HEK293 (cell line): ENCODE measurements at regions of chr6 and their contacts with region 1.

Region 1: DNA sequence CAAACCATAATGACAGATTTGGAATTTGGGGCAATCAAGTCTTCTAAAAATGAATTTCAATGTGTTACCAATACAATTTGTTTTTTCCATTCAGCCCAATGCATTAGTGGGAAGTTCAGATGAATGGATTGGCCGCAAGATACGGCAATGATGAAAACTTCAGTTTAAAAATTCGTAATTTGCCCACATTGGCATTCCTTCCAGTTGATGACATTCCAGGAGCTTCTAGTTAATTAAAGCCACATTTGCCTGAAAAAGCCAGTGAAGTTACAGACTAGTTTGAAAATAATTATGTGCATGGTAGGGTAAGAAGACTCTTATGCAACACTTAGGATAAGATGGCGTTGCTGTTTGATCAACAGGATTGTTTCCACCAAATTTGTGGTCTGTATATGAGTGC is 46.2 kb downstream of the NHLRC1 start:
- H3K4me3 ChIP-seq: no peak overlapping the region
- H3K27ac ChIP-seq: no peak overlapping the region
- H3K4me1 ChIP-seq: no peaks in the 10 kb centered on the region
- CTCF ChIP-seq: no peak

Region 2: GRCh38 chr6:18110162-18110561 is 33.9 kb after region 1 on chr6:
- CTCF ChIA-PET with region 1: interaction called, 12 read pairs
- POLR2A ChIA-PET with region 1: no interaction called
- H3K4me3 ChIP-seq: no peak overlapping the region
- H3K27ac ChIP-seq: no peak overlapping the region
- H3K4me1 ChIP-seq: no peaks in the 10 kb centered on the region
- CTCF ChIP-seq: no peak